Breast epithelium (tissue), 4 donors: ENCODE measurements at regions of chr5 and their contacts with region 1.

Region 1: GRCh38 chr5:66223636-66224035 is 79.5 kb downstream of the SREK1 start:
- DNase-seq: no peak
- H3K4me3 ChIP-seq: no peak overlapping the region
- H3K27ac ChIP-seq: no peak overlapping the region
- H3K4me1 ChIP-seq: no peaks in the 10 kb centered on the region
- H3K27me3 ChIP-seq: no peaks in the 10 kb centered on the region
- CTCF ChIP-seq: no peak
- POLR2A ChIP-seq: no peak

Region 2: DNA sequence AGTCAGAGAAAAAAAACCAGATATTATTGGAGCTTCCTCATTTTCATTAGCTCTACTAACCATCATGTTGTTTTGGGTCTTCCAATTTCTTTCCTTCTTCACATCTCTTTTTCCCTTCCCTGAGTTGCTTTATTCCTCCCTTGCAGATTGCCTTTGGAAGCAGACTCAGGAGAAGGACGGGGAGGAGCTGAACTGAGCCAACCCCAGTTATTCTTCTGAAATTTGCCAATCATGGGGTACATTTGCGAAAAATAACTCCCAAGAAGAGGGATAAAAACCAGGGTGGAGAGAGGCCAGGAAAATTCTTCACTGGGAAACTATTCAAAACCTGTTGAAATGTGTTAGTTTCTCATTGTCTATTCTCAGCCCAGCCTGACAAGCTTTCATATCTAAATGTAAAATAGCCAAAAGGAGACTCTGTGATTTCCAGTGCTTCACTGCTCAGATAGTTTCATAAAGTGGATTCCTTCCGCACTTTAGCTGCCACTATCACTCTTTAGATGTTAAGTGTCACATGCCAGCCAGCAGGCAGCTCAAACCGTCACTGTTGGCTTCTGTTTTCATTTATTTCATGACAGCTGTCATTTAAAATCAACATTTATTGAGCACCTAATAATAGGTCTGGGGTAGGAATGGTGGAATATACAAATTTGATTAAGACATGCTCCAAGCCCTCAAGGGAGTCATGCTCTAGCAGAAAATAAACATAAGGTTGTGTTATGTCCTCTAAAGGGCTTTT is 124.9 kb after region 1 on chr5:
- intact Hi-C with region 1: loop called (anchors 5 kb)
- DNase-seq: no peak
- H3K4me3 ChIP-seq: no peak overlapping the region
- H3K27ac ChIP-seq: no peak overlapping the region
- H3K4me1 ChIP-seq: no peaks in the 10 kb centered on the region
- H3K27me3 ChIP-seq: no peaks in the 10 kb centered on the region
- CTCF ChIP-seq: no peak
- POLR2A ChIP-seq: no peak

Region 3: GRCh38 chr5:66666778-66667177 is 443.1 kb after region 1 on chr5:
- intact Hi-C with region 1: loop called (anchors 5 kb)
- DNase-seq: no peak
- H3K4me3 ChIP-seq: no peak overlapping the region
- H3K27ac ChIP-seq: no peak overlapping the region
- H3K4me1 ChIP-seq: no peaks in the 10 kb centered on the region
- H3K27me3 ChIP-seq: no peaks in the 10 kb centered on the region
- CTCF ChIP-seq: no peak
- POLR2A ChIP-seq: no peak